ENCODE measurements at regions of chr11 and their contacts with region 1.

Region 1: GRCh38 chr11:46242916-46243795 is 34.3 kb upstream of the CREB3L1 start:
- DNase-seq: peak; percentile 95
- H3K4me3 ChIP-seq: peak overlapping the region; percentile 48 to 49
- H3K27ac ChIP-seq: peak overlapping the region; percentile 3 to 85
- H3K4me1 ChIP-seq: peaks cover 11% of the 10 kb centered on the region
- H3K27me3 ChIP-seq: no peaks in the 10 kb centered on the region
- CTCF ChIP-seq: no peak
- POLR2A ChIP-seq: no peak

Region 2: DNA sequence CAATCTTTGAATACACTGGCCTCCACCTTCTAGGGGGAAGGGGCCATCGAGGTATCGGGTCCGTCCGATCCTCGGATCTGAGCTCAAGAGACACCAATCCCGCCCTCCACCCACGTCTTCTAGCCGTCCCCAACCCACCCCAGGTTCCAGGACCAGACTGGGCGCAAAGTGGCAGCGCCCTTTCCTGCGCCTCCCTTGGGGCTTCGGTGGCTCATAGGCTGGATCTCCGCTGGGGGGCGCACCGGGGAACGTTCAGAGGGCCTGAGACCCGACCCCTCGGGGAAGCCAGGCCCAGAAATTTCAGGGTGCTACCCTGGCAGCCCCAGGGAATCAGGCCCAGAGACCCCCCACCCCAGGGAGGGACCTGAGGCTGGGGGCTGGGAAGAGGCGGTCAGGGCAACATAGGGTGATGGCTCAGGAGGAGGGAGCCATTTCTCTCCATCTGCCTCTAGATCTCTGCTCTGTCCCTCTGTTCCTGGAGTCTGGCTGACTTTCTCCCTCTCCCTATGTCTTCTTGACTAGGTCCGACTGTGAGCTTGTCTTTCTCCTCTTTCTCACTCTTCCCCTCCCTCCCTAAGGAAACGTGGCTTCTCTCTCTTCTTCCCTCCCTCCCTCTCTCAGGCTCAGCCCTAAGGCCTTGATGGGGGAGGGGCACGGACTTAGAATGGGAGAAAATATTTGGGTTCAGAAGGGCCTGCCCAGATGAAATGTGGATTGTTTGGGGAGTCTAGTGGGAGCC is 35.4 kb after region 1 on chr11:
- intact Hi-C with region 1: loop called (anchors 5 kb)
- DNase-seq: peak; percentile 54
- H3K4me3 ChIP-seq: peak overlapping the region; percentile 64 to 71
- H3K27ac ChIP-seq: peak overlapping the region; percentile 18 to 83
- H3K4me1 ChIP-seq: peaks cover 14% of the 10 kb centered on the region
- H3K27me3 ChIP-seq: no peaks in the 10 kb centered on the region
- CTCF ChIP-seq: peak; percentile 36 to 50 (median 43)
- POLR2A ChIP-seq: no peak

Region 3: DNA sequence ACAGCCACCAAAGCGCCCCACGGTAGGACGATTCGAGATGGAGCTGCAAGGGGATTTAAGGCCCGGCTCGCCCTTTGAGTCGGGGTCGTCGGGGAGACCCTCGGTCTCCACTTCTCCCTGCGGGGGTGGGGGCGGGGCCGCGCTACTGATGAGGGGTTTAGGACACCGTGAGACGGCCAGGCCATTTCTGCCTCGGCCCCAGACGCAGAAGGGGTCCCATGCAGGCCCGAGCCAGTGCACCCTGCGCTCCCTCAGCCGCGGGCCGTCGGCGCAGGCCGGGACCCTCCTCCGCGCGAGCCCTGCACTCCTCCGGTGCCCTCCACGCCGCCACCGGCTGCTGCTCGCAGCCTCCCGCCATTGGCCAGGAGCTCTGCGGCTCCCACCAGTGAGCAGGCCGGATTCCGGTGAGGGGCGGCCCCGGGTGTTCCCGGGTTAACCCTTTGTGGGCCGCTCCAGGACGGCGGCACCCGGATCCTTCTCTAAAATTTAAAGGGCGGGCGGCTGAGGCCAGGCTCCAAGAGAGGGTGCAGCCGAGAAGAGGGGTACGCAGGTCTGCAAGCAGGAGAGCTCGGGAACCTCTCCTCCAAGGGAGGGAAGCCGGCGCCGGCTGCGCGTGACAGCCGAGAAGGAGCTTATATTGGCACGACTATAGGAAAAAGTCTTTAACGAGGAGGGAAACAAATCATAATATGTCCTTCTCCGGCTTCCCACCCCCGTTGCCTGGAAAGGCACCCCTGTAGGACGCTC is 52.3 kb after region 1 on chr11:
- intact Hi-C with region 1: loop called (anchors 5 kb)
- DNase-seq: peak; percentile 85
- H3K4me3 ChIP-seq: peak overlapping the region; percentile 32 to 44
- H3K27ac ChIP-seq: peak overlapping the region in 1 of 2 donors; percentile 62
- H3K4me1 ChIP-seq: peaks cover 42% of the 10 kb centered on the region
- H3K27me3 ChIP-seq: no peaks in the 10 kb centered on the region
- CTCF ChIP-seq: no peak
- POLR2A ChIP-seq: no peak